Ascending aorta (tissue), 2 donors: ENCODE measurements at regions of chr17 and their contacts with region 1.

Region 1: DNA sequence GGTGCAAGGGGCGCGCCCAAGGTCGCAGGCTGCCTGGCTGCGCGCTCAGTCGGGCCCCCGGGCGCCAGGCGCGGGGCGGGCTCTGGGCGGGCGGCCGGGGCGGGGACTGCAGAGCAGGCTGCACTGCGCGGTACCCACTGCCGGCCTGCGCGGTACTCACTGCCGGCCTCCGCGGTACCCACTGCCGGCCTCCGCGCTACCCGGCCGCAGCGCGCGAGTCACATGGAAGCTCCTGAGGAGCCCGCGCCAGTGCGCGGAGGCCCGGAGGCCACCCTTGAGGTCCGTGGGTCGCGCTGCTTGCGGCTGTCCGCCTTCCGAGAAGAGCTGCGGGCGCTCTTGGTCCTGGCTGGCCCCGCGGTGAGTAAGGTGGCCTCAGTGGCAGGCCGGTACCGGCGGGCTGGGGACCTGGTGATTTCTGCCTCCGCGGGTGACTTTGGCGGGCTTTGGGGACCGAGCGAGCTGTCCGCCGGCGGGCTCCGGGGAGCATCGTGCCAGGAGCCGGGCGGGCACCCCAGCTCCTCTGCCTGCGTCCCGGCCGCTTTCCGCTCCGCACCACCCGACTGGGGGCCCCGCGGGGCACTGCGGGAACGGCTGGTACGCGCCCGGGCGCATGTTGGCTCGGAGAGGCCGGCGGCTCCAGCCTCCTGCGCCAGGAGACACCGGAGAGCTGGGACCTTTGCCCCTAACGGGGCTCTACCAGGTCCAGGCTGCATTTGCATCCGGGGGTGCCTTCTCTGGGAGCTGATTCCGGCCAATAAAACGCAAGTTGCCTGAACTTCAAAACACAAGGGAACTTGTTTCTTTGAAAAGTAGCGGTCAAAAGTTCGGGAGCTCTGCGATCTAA is at the start of gene SLC47A1:
- DNase-seq: peak in 1 of 2 donors; percentile 69
- H3K4me3 ChIP-seq: peak within 1 kb of the TSS; percentile 78 to 80
- H3K27ac ChIP-seq: peak within 1 kb of the TSS in 1 of 2 donors; percentile 40
- H3K4me1 ChIP-seq: peaks cover 0 to 7% of the 10 kb centered on the region in 2 donors
- H3K27me3 ChIP-seq: no peaks in the 10 kb centered on the region
- CTCF ChIP-seq: no peak
- total RNA-seq, gene SLC47A1: 0.64 TPM

Region 2: DNA sequence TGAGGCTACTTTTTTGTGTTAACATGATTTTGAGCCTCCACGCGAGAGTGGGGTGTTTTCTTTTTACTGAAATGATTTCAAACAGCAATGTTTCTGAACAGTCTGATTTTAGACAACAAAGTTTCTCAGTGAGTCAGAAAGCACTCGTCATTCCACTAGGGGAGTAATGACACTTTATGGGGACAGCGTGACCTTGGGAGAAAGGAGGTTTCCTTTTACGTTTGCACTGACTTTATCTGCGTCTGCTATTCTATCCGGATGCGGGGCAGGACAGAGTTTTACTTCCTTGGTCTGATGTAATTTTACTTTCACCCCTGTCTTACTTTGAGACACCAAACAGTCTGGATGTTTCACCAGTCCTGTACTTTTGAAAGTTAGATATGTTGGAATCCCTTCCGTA is 20.4 kb after region 1 on chr17:
- intact Hi-C with region 1: loop called (anchors 2 kb)
- DNase-seq: no peak
- H3K4me3 ChIP-seq: no peak overlapping the region
- H3K27ac ChIP-seq: peak overlapping the region; percentile 70 to 71
- H3K4me1 ChIP-seq: peaks cover 8 to 24% of the 10 kb centered on the region in 2 donors
- H3K27me3 ChIP-seq: no peaks in the 10 kb centered on the region
- CTCF ChIP-seq: no peak